ENCODE measurements at regions of chr5 and their contacts with region 1.

Region 1: GRCh38 chr5:671459-672328 is 21.5 kb downstream of the TPPP start:
- DNase-seq: peak; percentile 58 to 85 (median 67)
- ATAC-seq: peak; percentile 69
- H3K4me3 ChIP-seq: peak overlapping the region; percentile 36
- H3K4me3 Mint-ChIP-seq: no peak overlapping the region
- H3K27ac ChIP-seq: peak overlapping the region in 1 of 2 donors; percentile 68
- H3K27ac Mint-ChIP-seq: peak overlapping the region; percentile 95
- H3K4me1 ChIP-seq: peaks cover 37% of the 10 kb centered on the region
- H3K4me1 Mint-ChIP-seq: peaks cover 9% of the 10 kb centered on the region
- H3K27me3 ChIP-seq: no peaks in the 10 kb centered on the region
- H3K27me3 Mint-ChIP-seq: peaks cover 12% of the 10 kb centered on the region
- CTCF ChIP-seq: peak; percentile 89

Region 2: DNA sequence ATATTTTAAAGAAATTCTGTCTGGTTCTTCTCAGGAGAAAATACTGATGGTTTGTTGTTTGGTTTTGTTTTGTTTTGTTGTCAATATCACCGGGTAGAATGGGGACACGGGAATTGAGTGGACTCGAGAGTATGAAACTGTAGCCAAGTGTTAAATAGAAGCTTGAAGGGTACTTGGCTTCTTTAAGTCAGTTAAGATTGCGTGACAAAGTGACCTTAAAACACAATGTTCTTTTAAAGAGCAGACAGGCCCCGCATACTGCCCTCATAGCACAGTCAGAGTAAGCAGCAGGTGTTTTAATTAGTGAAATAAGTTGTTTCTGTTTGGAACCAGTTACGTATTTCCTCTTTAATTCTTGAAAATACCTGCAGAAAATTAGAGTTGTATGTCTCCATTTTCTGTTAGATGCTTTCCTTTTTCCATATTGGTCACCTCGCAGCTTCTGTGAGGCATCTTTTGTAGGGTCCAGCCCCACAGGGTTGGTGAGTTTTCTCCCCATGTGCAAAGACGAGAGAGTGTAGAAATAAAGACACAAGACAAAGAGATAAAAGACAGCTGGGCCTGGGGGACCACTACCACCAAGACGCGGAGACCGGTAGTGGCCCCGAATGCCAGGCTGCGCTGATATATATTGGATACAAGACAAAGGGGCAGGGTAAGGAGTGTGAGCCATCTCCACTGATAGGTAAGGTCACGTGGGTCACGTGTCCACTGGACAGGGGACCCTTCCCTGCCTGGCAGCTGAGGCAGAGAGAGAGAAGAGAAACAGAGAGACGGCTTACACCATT is 230.6 kb after region 1 on chr5:
- CTCF ChIA-PET with region 1: interaction called, 7 read pairs
- POLR2A ChIA-PET with region 1: no interaction called
- intact Hi-C with region 1: loop called (anchors 2 kb)
- DNase-seq: no peak
- ATAC-seq: no peak
- H3K4me3 ChIP-seq: no peak overlapping the region
- H3K4me3 Mint-ChIP-seq: no peak overlapping the region
- H3K27ac ChIP-seq: no peak overlapping the region
- H3K27ac Mint-ChIP-seq: no peak overlapping the region
- H3K4me1 ChIP-seq: no peaks in the 10 kb centered on the region
- H3K4me1 Mint-ChIP-seq: no peaks in the 10 kb centered on the region
- H3K27me3 ChIP-seq: no peaks in the 10 kb centered on the region
- H3K27me3 Mint-ChIP-seq: no peaks in the 10 kb centered on the region
- CTCF ChIP-seq: no peak

Measured in CD4-positive, alpha-beta T cell (primary cell).